A549 (cell line): ENCODE measurements at regions of chr2 and their contacts with region 1.

Region 1: DNA sequence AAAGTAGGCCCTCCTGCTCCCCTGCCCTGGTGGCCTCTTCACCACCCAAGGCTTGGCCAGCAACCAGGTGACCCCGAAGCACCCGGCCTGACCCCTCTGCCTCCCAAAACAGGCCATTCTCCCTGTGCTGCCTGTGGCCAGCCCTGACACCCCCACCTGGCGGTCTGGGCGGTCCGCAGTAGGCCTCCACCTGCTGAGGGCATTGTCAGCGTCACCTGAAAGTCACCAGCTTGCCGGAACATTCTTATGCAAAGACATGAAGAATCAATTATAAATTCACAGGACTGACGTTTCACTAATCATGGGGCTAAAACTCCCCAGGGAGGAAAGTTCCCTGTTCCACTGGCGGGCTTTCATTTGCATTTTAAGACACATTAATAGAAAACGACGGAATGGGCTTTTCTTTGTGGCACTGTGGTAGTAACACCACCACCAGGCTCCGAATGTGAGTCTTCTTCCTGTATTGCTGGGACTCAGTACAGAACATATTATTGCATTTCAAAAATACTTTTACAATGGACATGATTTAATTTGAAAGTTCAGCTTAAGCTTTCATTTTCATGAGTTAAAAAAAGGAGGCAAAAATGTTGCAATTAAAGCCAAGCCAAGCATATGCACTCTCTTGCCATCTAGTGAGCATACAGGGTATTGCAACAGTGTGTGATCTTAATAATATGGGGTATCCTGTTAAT is 57.4 kb downstream of the ADI1 start:
- DNase-seq: peak; percentile 56 to 60
- ATAC-seq: peak in 1 of 2 experiments; percentile 41; a peak in 3 of 6 replicates
- H3K4me3 ChIP-seq: no peak overlapping the region
- H3K27ac ChIP-seq: no peak overlapping the region
- H3K4me1 ChIP-seq: peaks cover 17% of the 10 kb centered on the region
- CTCF ChIP-seq: peak; percentile 82
- EP300 ChIP-seq: no peak
- POLR2A ChIP-seq: no peak
- RAD21 ChIP-seq: peak; percentile 63 to 64

Region 2: GRCh38 chr2:3423492-3424175 is 38.3 kb before region 1 on chr2:
- CTCF ChIA-PET with region 1: interaction called, 23 read pairs
- POLR2A ChIA-PET with region 1: no interaction called
- DNase-seq: peak; percentile 63 to 70
- ATAC-seq: peak; percentile 69 to 91
- H3K4me3 ChIP-seq: no peak overlapping the region
- H3K27ac ChIP-seq: no peak overlapping the region
- H3K4me1 ChIP-seq: no peaks in the 10 kb centered on the region
- CTCF ChIP-seq: peak; percentile 93
- EP300 ChIP-seq: no peak
- POLR2A ChIP-seq: no peak
- RAD21 ChIP-seq: peak; percentile 41 to 51; a peak in 4 of 5 replicates

Region 3: DNA sequence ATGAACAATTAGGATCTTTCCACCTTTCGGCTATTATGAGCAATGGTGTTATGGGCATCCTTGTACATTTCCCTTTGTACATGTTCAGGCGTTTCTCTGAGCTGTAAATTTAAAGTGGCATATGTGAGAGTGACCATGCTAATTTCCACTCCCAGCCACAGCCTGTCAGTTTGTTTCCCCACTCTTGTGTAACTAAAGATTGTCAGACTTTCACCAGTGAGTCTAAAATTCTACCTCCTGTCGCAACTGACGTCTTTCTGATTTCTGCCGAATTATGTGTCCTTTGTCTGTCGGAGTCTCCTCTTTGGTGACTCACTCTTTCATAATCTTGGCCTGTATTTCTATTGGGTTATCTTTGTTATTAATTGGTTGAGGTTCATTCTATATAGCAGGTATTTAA is 31.8 kb before region 1 on chr2:
- CTCF ChIA-PET with region 1: interaction called, 23 read pairs
- POLR2A ChIA-PET with region 1: no interaction called
- DNase-seq: no peak
- ATAC-seq: no peak
- H3K4me3 ChIP-seq: no peak overlapping the region
- H3K27ac ChIP-seq: no peak overlapping the region
- H3K4me1 ChIP-seq: no peaks in the 10 kb centered on the region
- CTCF ChIP-seq: no peak
- EP300 ChIP-seq: no peak
- POLR2A ChIP-seq: no peak
- RAD21 ChIP-seq: no peak

Region 4: DNA sequence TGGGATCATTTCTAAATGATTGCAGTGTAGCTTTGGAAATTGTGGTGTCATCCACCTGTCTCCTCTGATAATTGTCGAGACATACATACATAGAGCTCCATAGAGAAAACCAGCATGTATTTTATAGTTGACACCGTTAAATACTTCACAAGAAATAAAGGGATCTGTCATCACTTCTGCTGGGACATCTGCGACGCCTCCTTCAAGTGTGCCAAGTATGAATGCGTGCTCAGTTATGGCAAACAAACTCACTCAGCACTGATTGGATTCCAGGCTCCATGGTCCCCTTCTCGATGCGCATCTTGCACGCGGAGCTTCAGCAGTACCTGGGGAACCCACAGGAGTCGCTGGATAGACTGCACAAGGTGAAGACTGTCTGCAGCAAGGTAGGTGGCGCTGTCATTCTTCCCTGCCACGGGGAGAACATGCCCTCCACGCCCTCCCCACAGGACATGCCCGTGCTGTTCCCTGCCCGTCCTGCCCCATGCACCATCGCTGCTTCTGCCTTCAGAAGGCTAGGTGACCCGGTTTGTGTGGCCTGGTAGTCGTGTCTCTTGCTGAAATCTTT is 18.4 kb before region 1 on chr2:
- CTCF ChIA-PET with region 1: interaction called, 28 read pairs
- POLR2A ChIA-PET with region 1: no interaction called
- DNase-seq: peak in 1 of 2 experiments; percentile 48
- ATAC-seq: peak; percentile 66 to 82; a peak in 3 of 6 replicates
- H3K4me3 ChIP-seq: no peak overlapping the region
- H3K27ac ChIP-seq: no peak overlapping the region
- H3K4me1 ChIP-seq: no peaks in the 10 kb centered on the region
- CTCF ChIP-seq: no peak
- EP300 ChIP-seq: no peak
- POLR2A ChIP-seq: no peak
- RAD21 ChIP-seq: peak in 1 of 2 experiments; percentile 10; a peak in 1 of 5 replicates

Region 5: GRCh38 chr2:3449086-3449485 is 12.9 kb before region 1 on chr2:
- CTCF ChIA-PET with region 1: interaction called, 64 read pairs
- POLR2A ChIA-PET with region 1: no interaction called
- DNase-seq: no peak
- ATAC-seq: no peak
- H3K4me3 ChIP-seq: no peak overlapping the region
- H3K27ac ChIP-seq: no peak overlapping the region
- H3K4me1 ChIP-seq: no peaks in the 10 kb centered on the region
- CTCF ChIP-seq: no peak
- EP300 ChIP-seq: no peak
- POLR2A ChIP-seq: no peak
- RAD21 ChIP-seq: no peak

Region 6: GRCh38 chr2:3472966-3473365 is 11.0 kb after region 1 on chr2:
- CTCF ChIA-PET with region 1: interaction called, 25 read pairs
- POLR2A ChIA-PET with region 1: no interaction called
- DNase-seq: no peak
- ATAC-seq: no peak
- H3K4me3 ChIP-seq: no peak overlapping the region
- H3K27ac ChIP-seq: no peak overlapping the region
- H3K4me1 ChIP-seq: no peaks in the 10 kb centered on the region
- CTCF ChIP-seq: no peak
- EP300 ChIP-seq: no peak
- POLR2A ChIP-seq: no peak
- RAD21 ChIP-seq: no peak